SK-N-SH (cell line): ENCODE measurements at regions of chr11 and their contacts with region 1.

Region 1: GRCh38 chr11:44755556-44756523 is 29.1 kb downstream of the TSPAN18 start:
- DNase-seq: peak; percentile 42
- H3K4me3 ChIP-seq: no peak overlapping the region; a peak in 1 of 4 replicates
- H3K27ac ChIP-seq: peak overlapping the region; percentile 23 to 100; a peak in 3 of 4 replicates
- H3K4me1 ChIP-seq: peaks cover 16 to 53% of the 10 kb centered on the region in 2 experiments; a peak in 3 of 4 replicates
- H3K27me3 ChIP-seq: no peaks in the 10 kb centered on the region; the same call in 1 of the 2 replicates
- CTCF ChIP-seq: no peak
- EP300 ChIP-seq: peak; percentile 55 to 58; a peak in 2 of 4 replicates
- RAD21 ChIP-seq: peak; percentile 34; the same call in 1 of the 2 replicates

Region 2: DNA sequence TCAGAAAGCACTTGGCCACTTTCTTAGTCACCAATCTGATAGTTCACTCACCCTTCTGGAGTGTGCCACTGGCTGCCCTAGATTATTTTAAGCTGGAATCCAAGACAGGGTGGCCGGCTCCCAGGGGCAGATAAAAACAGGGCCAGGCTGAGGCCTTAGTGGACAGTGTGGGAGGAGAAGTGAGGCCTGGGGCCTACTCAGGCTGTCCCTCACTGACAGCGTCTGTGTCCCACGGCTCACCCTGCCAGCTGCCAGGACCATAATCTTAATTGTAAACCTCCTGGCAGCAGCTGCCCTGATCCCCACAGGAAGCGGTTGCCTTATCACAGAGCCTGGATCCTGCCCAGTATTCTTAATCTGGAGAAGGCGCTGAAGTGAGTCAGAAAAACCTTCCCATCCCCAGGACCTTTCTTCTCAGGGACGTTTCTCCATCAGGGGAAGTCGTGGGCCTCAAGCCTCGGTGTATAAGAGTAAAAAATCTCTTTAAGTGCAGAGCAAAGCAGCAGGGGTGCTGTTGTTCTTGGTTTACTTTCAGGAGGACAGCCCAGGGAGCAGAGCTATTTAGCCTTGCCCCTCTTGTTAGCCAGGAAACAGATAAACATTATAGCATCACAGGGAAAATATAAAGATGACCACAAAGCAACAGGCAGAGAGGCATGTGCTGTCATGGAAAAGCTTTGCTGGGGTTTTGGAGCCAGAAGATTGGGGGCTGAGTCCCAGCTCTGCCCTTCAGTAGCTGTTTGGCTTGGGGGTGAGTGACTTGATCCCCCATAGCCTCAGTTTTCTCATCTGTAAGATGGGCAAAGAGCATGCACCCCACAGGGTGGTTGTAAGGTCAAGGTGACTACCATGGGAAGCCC is 10.5 kb after region 1 on chr11:
- CTCF ChIA-PET with region 1: interaction called, 11 read pairs
- POLR2A ChIA-PET with region 1: interaction called, 8 read pairs
- DNase-seq: peak; percentile 76
- H3K4me3 ChIP-seq: no peak overlapping the region
- H3K27ac ChIP-seq: peak overlapping the region; percentile 76 to 99
- H3K4me1 ChIP-seq: peaks cover 44 to 74% of the 10 kb centered on the region in 2 experiments
- H3K27me3 ChIP-seq: no peaks in the 10 kb centered on the region
- CTCF ChIP-seq: no peak
- EP300 ChIP-seq: peak; percentile 51 to 90
- RAD21 ChIP-seq: peak; percentile 18; the same call in 1 of the 2 replicates

Region 3: GRCh38 chr11:44797941-44798606 is 42.2 kb after region 1 on chr11:
- CTCF ChIA-PET with region 1: no interaction called
- POLR2A ChIA-PET with region 1: no interaction called
- DNase-seq: no peak
- H3K4me3 ChIP-seq: no peak overlapping the region
- H3K27ac ChIP-seq: no peak overlapping the region
- H3K4me1 ChIP-seq: peaks cover 0 to 31% of the 10 kb centered on the region in 2 experiments; a peak in 2 of 4 replicates
- H3K27me3 ChIP-seq: peaks cover 23% of the 10 kb centered on the region
- CTCF ChIP-seq: no peak
- EP300 ChIP-seq: no peak
- RAD21 ChIP-seq: no peak